ENCODE measurements at regions of chr9 and their contacts with region 1.

Region 1: GRCh38 chr9:26597542-26598149 is 295.0 kb downstream of the CAAP1 start:
- DNase-seq: no peak

Region 2: DNA sequence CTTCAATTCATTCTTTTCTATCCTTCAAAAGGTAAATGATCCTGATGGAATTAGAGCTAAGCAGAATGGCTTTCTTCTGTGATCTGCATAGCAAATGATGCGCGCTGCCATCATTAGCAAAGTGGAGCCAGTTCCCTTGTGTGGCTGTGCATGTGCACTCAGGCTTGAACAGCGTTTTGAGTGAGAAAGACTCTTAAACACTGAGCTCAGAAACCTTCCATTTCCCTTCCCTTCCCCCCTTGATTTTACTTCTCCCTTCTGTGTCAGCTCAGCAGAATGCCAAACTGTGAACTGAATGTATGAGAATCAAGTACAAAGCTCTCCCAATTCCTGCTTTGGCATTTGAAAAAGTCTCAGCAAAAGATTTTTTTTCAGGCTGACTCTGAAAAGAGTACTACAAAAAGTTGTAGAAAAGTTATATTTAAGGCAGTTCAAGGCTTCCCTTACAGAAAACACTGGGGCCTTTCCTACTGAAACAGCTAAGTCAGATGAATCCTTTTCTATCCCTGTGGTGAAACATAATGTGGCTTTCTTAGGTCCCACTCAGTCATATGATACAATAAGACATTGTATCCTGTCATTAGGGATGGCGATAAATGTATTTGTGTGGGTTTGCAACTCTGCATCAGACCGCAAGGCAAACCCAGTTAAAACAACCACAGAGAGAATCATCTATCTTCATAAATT is 72.2 kb after region 1 on chr9:
- intact Hi-C with region 1: no loop called
- DNase-seq: no peak

Region 3: GRCh38 chr9:27094640-27095298 is 497.1 kb after region 1 on chr9:
- intact Hi-C with region 1: loop called in 1 of 2 experiments (anchors 5 kb)
- DNase-seq: no peak